Activated naive CD4-positive, alpha-beta T cell treated with anti-CD3 and anti-CD28 coated beads for 36 hours (primary cell): ENCODE measurements at regions of chr1 and their contacts with region 1.

Region 1: DNA sequence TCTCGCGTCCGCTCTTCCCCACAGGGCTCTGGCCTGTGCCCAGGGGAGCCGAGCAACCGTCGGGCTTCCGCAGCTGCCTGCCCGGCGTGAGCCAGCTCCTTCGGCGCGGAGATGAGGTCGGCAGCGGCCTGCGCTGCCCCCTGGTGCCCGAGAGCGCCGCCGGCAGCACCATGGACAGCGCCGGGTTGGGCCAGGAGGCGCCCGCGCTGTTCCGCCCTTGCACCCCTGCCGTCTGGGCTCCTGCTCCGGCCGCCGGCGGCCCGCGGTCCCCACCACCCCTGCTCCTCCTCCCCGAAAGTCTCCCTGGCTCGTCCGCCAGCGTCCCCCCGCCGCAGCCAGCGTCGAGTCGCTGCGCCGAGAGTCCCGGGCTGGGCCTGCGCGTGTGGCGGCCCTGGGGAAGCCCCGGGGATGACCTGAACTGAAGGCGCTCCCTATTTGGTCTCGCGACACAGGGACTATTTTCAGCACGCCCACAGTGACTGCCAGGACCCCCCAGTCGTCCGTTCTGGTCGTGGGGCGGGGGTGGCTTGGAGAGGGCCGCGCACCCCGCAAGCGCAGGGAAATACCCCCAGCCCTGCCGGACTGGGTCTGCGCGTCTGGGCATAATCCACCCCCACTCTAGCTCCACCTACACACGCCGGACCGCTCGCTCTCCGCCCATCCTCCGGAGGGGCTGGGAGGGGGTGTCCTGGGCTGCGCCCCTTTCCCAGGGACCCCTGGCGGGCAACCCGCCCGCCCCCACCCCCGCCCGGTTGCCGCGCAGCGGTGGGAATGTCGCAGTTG is 1.3 kb downstream of the HES3 start:
- DNase-seq: peak; percentile 79
- H3K4me3 Mint-ChIP-seq: no peak overlapping the region
- H3K27ac Mint-ChIP-seq: no peak overlapping the region
- H3K4me1 Mint-ChIP-seq: peaks cover 14% of the 10 kb centered on the region
- H3K27me3 Mint-ChIP-seq: peaks cover 54% of the 10 kb centered on the region

Region 2: DNA sequence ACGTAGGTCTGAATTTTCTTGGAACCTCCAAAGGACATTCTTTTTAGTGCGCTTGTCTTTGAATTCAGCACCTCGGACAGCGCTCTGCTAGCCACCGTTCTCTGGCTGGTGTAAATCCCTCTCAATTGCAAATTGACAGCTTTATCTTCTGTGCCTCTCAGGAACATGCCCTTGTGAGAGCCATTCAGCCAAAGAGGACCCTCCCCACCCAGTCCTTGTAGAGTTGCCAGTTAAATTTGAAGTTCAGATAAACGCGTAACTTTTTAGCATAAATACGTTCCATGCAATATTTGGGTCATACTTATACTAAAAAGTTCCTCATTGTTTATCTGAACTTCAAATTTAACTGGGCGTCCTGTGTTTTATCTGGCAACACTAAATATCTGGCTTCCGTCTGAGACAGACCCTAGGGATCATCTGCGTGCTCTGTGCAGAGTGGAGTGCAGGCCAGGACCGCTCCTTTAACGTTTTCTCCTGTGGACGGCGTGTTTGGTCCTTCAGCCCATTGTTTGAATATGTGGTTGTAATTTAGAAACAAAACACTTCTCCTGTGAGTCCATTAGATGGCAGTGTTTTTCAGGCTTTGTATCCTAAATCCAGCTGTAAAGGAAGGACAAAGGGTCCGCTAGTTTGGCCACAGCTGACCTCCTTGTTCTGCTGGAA is 192.6 kb before region 1 on chr1:
- CTCF ChIA-PET with region 1: no interaction called
- intact Hi-C with region 1: loop called (anchors 2 kb)
- DNase-seq: peak; percentile 67
- H3K4me3 Mint-ChIP-seq: no peak overlapping the region
- H3K27ac Mint-ChIP-seq: no peak overlapping the region
- H3K4me1 Mint-ChIP-seq: peaks cover 12% of the 10 kb centered on the region
- H3K27me3 Mint-ChIP-seq: no peaks in the 10 kb centered on the region

Region 3: GRCh38 chr1:6343506-6344405 is 98.5 kb after region 1 on chr1:
- CTCF ChIA-PET with region 1: interaction called, 8 read pairs
- intact Hi-C with region 1: loop called (anchors 1 kb)
- DNase-seq: peak; percentile 76
- H3K4me3 Mint-ChIP-seq: no peak overlapping the region
- H3K27ac Mint-ChIP-seq: no peak overlapping the region
- H3K4me1 Mint-ChIP-seq: peaks cover 10% of the 10 kb centered on the region
- H3K27me3 Mint-ChIP-seq: no peaks in the 10 kb centered on the region

Region 4: DNA sequence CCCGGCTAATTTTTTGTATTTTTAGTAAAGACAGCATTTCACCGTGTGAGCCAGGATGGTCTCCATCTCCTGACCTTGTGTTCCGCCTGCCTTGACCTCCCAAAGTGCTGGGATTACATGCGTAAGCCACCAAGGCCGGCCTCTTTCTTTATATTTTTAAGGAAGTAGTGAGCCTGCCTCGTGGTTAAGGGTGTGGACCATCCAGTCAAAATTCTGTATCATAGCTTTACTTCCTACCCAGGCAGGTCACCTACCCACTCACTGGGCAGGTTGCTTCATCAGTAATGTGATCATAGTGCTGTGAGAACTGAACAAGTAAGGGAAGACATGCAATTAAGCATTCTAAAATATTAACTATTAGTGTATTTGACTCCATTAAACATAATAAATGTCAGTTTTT is 156.4 kb after region 1 on chr1:
- CTCF ChIA-PET with region 1: interaction called, 49 read pairs
- intact Hi-C with region 1: loop called (anchors 1 kb)
- DNase-seq: no peak
- H3K4me3 Mint-ChIP-seq: no peak overlapping the region
- H3K27ac Mint-ChIP-seq: no peak overlapping the region
- H3K4me1 Mint-ChIP-seq: peaks cover 3% of the 10 kb centered on the region
- H3K27me3 Mint-ChIP-seq: no peaks in the 10 kb centered on the region

Region 5: GRCh38 chr1:6475381-6476133 is 230.3 kb after region 1 on chr1:
- CTCF ChIA-PET with region 1: no interaction called
- intact Hi-C with region 1: loop called (anchors 5 kb)
- DNase-seq: peak; percentile 81
- H3K4me3 Mint-ChIP-seq: no peak overlapping the region
- H3K27ac Mint-ChIP-seq: no peak overlapping the region
- H3K4me1 Mint-ChIP-seq: peaks cover 3% of the 10 kb centered on the region
- H3K27me3 Mint-ChIP-seq: no peaks in the 10 kb centered on the region